CD4-positive, alpha-beta T cell (primary cell): ENCODE measurements at regions of chr6 and their contacts with region 1.

Region 1: GRCh38 chr6:159062564-159062945 is 17.8 kb upstream of the TAGAP start:
- DNase-seq: peak in 13 of 14 experiments; percentile 27 to 90 (median 56)
- ATAC-seq: peak; percentile 89
- H3K4me3 ChIP-seq: peak overlapping the region; percentile 17
- H3K4me3 Mint-ChIP-seq: peak overlapping the region; percentile 67
- H3K27ac ChIP-seq: peak overlapping the region; percentile 84 to 90
- H3K27ac Mint-ChIP-seq: peak overlapping the region; percentile 96
- H3K4me1 ChIP-seq: peaks cover 63% of the 10 kb centered on the region
- H3K4me1 Mint-ChIP-seq: peaks cover 86% of the 10 kb centered on the region
- H3K27me3 ChIP-seq: no peaks in the 10 kb centered on the region
- H3K27me3 Mint-ChIP-seq: no peaks in the 10 kb centered on the region
- CTCF ChIP-seq: no peak

Region 2: DNA sequence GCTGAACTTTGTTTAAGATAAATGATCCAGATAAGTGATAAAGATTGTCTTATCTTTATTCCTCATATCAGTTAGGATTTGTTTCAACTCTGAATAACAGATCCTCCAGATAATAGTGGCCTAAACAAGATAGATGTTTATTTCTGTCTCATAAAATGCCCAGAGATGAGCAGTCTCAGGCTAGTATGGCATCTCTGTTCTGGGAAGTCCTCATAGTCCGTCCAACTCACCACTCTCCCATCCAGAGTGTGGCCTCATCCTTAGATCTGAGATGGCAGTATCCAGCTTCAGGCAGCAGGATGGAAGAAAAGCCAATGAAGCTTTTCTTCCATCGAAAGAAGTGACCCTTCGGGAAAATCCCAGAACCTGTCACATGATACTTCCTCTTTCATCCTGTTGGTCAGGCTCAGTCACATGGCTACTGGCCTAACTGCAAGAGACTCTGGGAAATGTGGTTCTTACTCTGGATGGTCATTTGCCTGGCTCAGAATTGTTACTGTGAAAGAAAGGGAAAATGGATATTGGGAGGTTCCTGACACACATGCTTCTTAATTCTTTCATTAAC is 11.6 kb after region 1 on chr6:
- CTCF ChIA-PET with region 1: interaction called, 4 read pairs
- POLR2A ChIA-PET with region 1: interaction called, 15 read pairs
- intact Hi-C with region 1: no loop called
- DNase-seq: no peak
- ATAC-seq: no peak
- H3K4me3 ChIP-seq: no peak overlapping the region
- H3K4me3 Mint-ChIP-seq: no peak overlapping the region
- H3K27ac ChIP-seq: no peak overlapping the region
- H3K27ac Mint-ChIP-seq: no peak overlapping the region
- H3K4me1 ChIP-seq: peaks cover 14% of the 10 kb centered on the region
- H3K4me1 Mint-ChIP-seq: peaks cover 31% of the 10 kb centered on the region
- H3K27me3 ChIP-seq: no peaks in the 10 kb centered on the region
- H3K27me3 Mint-ChIP-seq: no peaks in the 10 kb centered on the region
- CTCF ChIP-seq: no peak

Region 3: DNA sequence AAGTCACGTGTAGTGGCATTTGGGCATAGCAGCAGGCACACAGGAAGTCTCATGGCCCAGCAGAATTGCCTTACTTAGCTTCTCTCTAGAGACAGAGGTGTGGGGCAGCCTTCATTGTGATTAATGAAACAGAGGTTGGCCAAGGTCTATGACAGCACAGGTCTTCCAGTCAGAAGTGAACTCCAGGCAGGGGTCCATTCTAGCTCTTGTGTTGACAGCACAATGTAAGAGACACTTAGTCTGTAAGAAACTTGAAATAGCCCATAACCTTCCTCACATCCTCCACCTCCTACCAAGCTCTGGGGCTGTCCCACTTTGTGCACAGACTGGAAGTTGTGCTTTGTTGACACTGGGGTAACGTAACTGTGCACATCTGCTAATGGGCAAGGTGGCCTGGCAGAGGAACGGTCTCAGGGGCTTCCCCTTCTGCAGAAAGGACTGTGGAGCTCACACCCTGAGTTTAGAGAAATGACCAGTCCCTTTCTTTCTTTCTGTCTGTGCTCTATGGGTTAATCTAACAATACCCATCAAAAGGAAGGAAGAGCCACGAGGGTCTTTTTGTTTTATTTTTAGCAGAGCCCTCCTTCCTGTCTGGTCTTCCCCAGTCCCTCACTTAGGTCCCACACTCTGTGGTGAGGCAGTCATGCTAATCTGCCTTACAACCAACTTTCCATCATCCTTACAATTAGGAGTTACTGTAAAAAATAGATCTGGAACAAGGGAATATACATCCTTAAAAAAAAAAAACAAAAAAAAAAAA is 17.8 kb after region 1 on chr6:
- CTCF ChIA-PET with region 1: interaction called, 4 read pairs
- POLR2A ChIA-PET with region 1: interaction called, 15 read pairs
- intact Hi-C with region 1: no loop called
- DNase-seq: peak in 1 of 14 experiments; percentile 36
- ATAC-seq: peak; percentile 68
- H3K4me3 ChIP-seq: no peak overlapping the region
- H3K4me3 Mint-ChIP-seq: no peak overlapping the region
- H3K27ac ChIP-seq: no peak overlapping the region
- H3K27ac Mint-ChIP-seq: no peak overlapping the region
- H3K4me1 ChIP-seq: peaks cover 24% of the 10 kb centered on the region
- H3K4me1 Mint-ChIP-seq: peaks cover 36% of the 10 kb centered on the region
- H3K27me3 ChIP-seq: no peaks in the 10 kb centered on the region
- H3K27me3 Mint-ChIP-seq: no peaks in the 10 kb centered on the region
- CTCF ChIP-seq: no peak

Region 4: GRCh38 chr6:159098636-159099106 is 36.1 kb after region 1 on chr6:
- CTCF ChIA-PET with region 1: interaction called, 7 read pairs
- POLR2A ChIA-PET with region 1: interaction called, 32 read pairs
- intact Hi-C with region 1: loop called (anchors 1 to 2 kb)
- DNase-seq: peak; percentile 41 to 95 (median 61)
- ATAC-seq: peak; percentile 83
- H3K4me3 ChIP-seq: peak overlapping the region; percentile 28
- H3K4me3 Mint-ChIP-seq: peak overlapping the region; percentile 43
- H3K27ac ChIP-seq: peak overlapping the region; percentile 70 to 87
- H3K27ac Mint-ChIP-seq: peak overlapping the region; percentile 86
- H3K4me1 ChIP-seq: peaks cover 69% of the 10 kb centered on the region
- H3K4me1 Mint-ChIP-seq: peaks cover 76% of the 10 kb centered on the region
- H3K27me3 ChIP-seq: no peaks in the 10 kb centered on the region
- H3K27me3 Mint-ChIP-seq: no peaks in the 10 kb centered on the region
- CTCF ChIP-seq: no peak

Region 5: DNA sequence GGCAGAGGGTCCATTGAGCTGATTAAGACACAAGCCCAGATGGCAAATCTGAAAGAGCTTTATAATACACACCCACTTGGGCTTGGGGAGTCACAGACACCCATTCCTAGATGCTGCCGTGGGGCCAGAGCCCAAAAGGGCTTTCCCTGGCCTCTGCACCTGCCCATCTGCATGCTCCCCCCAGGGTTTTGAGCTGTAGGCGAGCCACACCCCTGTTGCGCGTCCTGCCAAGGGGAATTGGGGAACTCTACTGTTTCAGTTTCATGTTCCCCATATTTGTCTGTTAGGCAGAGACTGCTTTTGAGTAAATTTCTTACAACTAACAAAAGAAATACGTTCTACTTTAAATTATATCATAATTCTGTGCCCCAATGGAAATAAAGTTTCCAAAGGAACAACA is 53.8 kb after region 1 on chr6:
- CTCF ChIA-PET with region 1: no interaction called
- POLR2A ChIA-PET with region 1: no interaction called
- intact Hi-C with region 1: no loop called
- DNase-seq: peak in 2 of 14 experiments; percentile 48 to 58
- ATAC-seq: no peak
- H3K4me3 ChIP-seq: no peak overlapping the region
- H3K4me3 Mint-ChIP-seq: no peak overlapping the region
- H3K27ac ChIP-seq: no peak overlapping the region
- H3K27ac Mint-ChIP-seq: no peak overlapping the region
- H3K4me1 ChIP-seq: peaks cover 32% of the 10 kb centered on the region
- H3K4me1 Mint-ChIP-seq: no peaks in the 10 kb centered on the region
- H3K27me3 ChIP-seq: no peaks in the 10 kb centered on the region
- H3K27me3 Mint-ChIP-seq: no peaks in the 10 kb centered on the region
- CTCF ChIP-seq: no peak